Sciatic nerve (tissue), 2 donors: ENCODE measurements at regions of chr6 and their contacts with region 1.

Region 1: DNA sequence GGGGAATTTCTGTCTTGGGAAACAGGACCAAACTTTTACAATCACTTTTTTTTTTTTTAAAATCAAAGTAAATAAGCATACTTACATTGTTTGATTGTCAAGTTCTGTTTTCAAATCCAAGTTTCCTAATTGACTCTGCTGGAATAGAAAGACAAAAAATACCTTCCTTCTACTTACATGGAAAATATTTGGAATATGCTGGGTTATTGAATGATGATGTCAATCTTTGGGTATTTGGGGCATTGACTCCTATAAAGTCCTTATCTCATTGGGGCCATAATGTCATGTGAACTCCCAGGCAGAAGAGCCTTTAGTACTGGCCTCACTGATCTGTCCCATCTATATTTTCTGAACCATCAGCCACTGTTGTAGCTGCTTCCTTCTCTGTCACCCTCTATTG is 122.6 kb upstream of the NOX3 start:
- DNase-seq: no peak
- ATAC-seq: no peak

Region 2: DNA sequence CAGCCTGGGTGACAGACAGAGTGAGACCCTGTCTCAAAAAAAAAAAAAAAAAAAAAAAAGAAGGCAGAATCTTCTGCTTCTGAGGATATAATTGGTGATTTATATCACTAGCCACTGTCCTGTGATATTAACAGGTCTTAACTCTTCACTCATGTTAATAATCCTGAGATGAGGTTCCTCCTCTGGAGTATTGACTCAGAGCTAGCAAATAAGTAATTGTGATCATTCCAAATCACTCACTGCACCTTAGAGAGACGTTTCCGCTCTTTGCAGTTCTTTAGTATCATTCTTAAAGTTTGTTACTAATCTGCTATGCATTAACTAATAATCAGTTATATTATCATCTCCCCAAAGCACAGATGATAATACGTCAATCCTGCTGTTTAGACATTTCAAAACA is 81.0 kb before region 1 on chr6:
- intact Hi-C with region 1: loop called (anchors 2 kb)
- DNase-seq: no peak
- ATAC-seq: no peak

Region 3: DNA sequence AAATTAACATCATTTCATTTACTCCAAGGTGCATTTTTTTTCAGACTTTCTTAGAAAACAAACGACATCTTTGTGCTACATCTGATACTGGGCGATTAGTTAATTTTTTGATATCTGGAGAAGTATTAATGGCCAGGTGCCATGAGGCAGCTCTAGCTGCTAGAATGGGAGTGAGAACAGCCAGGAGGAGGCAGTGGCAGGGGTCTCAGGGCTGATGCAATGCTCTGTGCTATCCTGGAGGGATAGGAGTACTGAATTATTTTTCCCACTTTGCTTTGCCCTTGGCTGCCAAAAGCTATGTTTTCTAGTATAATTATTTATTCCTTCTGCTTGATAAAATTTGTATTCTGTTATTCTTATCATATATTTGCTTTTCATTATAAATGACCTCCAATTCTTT is 10.9 kb after region 1 on chr6:
- intact Hi-C with region 1: no loop called
- DNase-seq: no peak
- ATAC-seq: no peak